Gastrocnemius medialis (tissue), 4 donors: ENCODE measurements at regions of chr15 and their contacts with region 1.

Region 1: DNA sequence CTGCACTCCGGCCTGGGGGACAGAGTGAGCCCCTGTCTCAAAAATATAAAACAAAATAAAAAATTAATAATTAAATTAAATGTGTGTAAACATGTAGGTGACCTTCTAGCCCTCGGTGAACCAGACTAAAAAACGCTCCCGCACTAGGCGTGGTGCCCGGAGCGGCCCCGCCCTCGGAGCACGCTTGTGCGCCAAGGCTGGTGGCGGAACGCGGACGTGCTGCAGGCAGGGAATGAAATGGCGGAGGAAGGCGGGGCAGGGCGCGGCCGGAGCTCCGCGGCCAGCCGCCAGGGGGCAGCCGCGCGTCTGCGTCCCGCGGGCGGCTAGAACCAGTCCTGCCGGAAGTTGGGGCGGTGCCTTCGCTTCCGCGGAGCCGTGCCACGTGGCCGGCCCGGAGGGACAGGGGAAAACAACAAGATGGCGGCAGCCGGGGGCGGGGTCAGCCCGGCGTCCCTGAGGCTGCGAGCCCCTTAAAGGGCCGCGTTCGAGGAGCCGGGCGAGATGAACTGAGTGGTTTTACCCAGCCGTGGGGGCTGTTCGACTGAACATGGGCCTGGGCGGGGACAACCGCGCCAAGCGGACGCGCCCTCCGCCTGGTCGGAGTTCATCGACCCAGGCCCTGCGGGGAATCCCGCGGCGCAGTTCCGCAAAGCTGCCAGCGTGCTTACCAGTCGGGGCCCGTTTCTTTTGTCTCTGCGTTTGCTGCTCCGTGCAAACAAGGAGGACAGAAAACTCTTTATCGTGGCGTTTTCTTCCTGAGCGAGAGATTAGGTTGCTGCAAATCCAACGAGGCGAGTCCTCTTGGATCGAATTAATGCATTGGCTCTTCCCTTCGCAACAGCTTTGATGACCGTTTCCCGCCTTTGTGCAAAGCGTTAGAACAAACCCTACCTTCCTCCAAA is 90.9 kb upstream of the CHD2 start:
- DNase-seq: peak; percentile 97 to 99
- ATAC-seq: peak; percentile 62 to 70
- H3K4me3 ChIP-seq: peak overlapping the region; percentile 61 to 84 (median 70)
- H3K27ac ChIP-seq: peak overlapping the region; percentile 97 to 99 (median 98)
- H3K4me1 ChIP-seq: peaks cover 37 to 45% of the 10 kb centered on the region in 2 donors
- H3K27me3 ChIP-seq: no peaks in the 10 kb centered on the region
- CTCF ChIP-seq: peak; percentile 79 to 100 (median 99)
- POLR2A ChIP-seq: peak; percentile 78 to 92

Region 2: GRCh38 chr15:92625251-92625980 is 183.8 kb before region 1 on chr15:
- in situ Hi-C with region 1: no loop called
- intact Hi-C with region 1: no loop called
- DNase-seq: no peak
- ATAC-seq: no peak
- H3K4me3 ChIP-seq: no peak overlapping the region
- H3K27ac ChIP-seq: peak overlapping the region; percentile 84 to 92 (median 90)
- H3K4me1 ChIP-seq: peaks cover 20 to 28% of the 10 kb centered on the region in 2 donors
- H3K27me3 ChIP-seq: no peaks in the 10 kb centered on the region
- CTCF ChIP-seq: no peak
- POLR2A ChIP-seq: no peak

Region 3: GRCh38 chr15:92831655-92832328 is 22.6 kb after region 1 on chr15:
- in situ Hi-C with region 1: no loop called
- intact Hi-C with region 1: loop called (anchors 1 kb)
- DNase-seq: peak; percentile 95 to 98
- ATAC-seq: peak; percentile 97
- H3K4me3 ChIP-seq: peak overlapping the region; percentile 41 to 48 (median 42)
- H3K27ac ChIP-seq: peak overlapping the region; percentile 85 to 92 (median 90)
- H3K4me1 ChIP-seq: peaks cover 37 to 38% of the 10 kb centered on the region in 2 donors
- H3K27me3 ChIP-seq: no peaks in the 10 kb centered on the region
- CTCF ChIP-seq: no peak
- POLR2A ChIP-seq: peak; percentile 76 to 95

Region 4: GRCh38 chr15:92892201-92892555 is 82.9 kb after region 1 on chr15:
- in situ Hi-C with region 1: no loop called
- intact Hi-C with region 1: no loop called
- DNase-seq: no peak
- ATAC-seq: no peak
- H3K4me3 ChIP-seq: no peak overlapping the region
- H3K27ac ChIP-seq: peak overlapping the region; percentile 51 to 65 (median 57)
- H3K4me1 ChIP-seq: peaks cover 40 to 57% of the 10 kb centered on the region in 2 donors
- H3K27me3 ChIP-seq: no peaks in the 10 kb centered on the region
- CTCF ChIP-seq: no peak
- POLR2A ChIP-seq: no peak

Region 5: GRCh38 chr15:92903941-92904831 is 95.0 kb after region 1 on chr15:
- in situ Hi-C with region 1: no loop called
- intact Hi-C with region 1: loop called (anchors 1 kb)
- DNase-seq: peak; percentile 98 to 99
- ATAC-seq: peak; percentile 80 to 83
- H3K4me3 ChIP-seq: peak overlapping the region; percentile 64 to 76 (median 71)
- H3K27ac ChIP-seq: peak overlapping the region; percentile 94 to 97 (median 96)
- H3K4me1 ChIP-seq: peaks cover 51 to 60% of the 10 kb centered on the region in 2 donors
- H3K27me3 ChIP-seq: no peaks in the 10 kb centered on the region
- CTCF ChIP-seq: no peak
- POLR2A ChIP-seq: peak; percentile 94 to 98

Region 6: GRCh38 chr15:93066834-93067509 is 257.7 kb after region 1 on chr15:
- in situ Hi-C with region 1: loop called in 1 of 4 experiments (anchors 10 kb)
- intact Hi-C with region 1: loop called (anchors 2 kb)
- DNase-seq: peak in 1 of 2 donors; percentile 46
- ATAC-seq: no peak
- H3K4me3 ChIP-seq: peak overlapping the region in 2 of 4 donors; percentile 15 to 19
- H3K27ac ChIP-seq: peak overlapping the region; percentile 94 to 98 (median 96)
- H3K4me1 ChIP-seq: peaks cover 90 to 96% of the 10 kb centered on the region in 2 donors
- H3K27me3 ChIP-seq: no peaks in the 10 kb centered on the region
- CTCF ChIP-seq: no peak
- POLR2A ChIP-seq: no peak

Region 7: GRCh38 chr15:93467327-93467726 is 658.1 kb after region 1 on chr15:
- in situ Hi-C with region 1: loop called in 1 of 4 experiments (anchors 25 kb)
- intact Hi-C with region 1: no loop called
- DNase-seq: peak; percentile 96 to 98
- ATAC-seq: peak; percentile 99 to 100
- H3K4me3 ChIP-seq: no peak overlapping the region
- H3K27ac ChIP-seq: peak overlapping the region; percentile 47 to 72 (median 70)
- H3K4me1 ChIP-seq: peaks cover 11 to 22% of the 10 kb centered on the region in 2 donors
- H3K27me3 ChIP-seq: no peaks in the 10 kb centered on the region
- CTCF ChIP-seq: peak in 1 of 5 experiments; percentile 17
- POLR2A ChIP-seq: no peak